ENCODE measurements at regions of chrX and their contacts with region 1.

Region 1: GRCh38 chrX:9525511-9526248 is 60.8 kb downstream of the TBL1X start:
- DNase-seq: peak in 2 of 35 experiments; percentile 2 to 21
- ATAC-seq: no peak
- H3K4me3 ChIP-seq: no peak overlapping the region
- H3K4me3 Mint-ChIP-seq: peak overlapping the region in 2 of 3 donors; percentile 3 to 21
- H3K27ac ChIP-seq: no peak overlapping the region
- H3K27ac Mint-ChIP-seq: peak overlapping the region; percentile 29 to 32
- H3K4me1 ChIP-seq: peaks cover 5 to 12% of the 10 kb centered on the region in 2 experiments
- H3K4me1 Mint-ChIP-seq: peaks cover 50 to 63% (median 55%) of the 10 kb centered on the region in 3 donors
- H3K27me3 ChIP-seq: no peaks in the 10 kb centered on the region
- H3K27me3 Mint-ChIP-seq: no peaks in the 10 kb centered on the region

Region 2: GRCh38 chrX:9482408-9482807 is 43.3 kb before region 1 on chrX:
- CTCF ChIA-PET with region 1: no interaction called
- POLR2A ChIA-PET with region 1: interaction called in 1 of 2 experiments, 18 read pairs
- DNase-seq: no peak
- ATAC-seq: no peak
- H3K4me3 ChIP-seq: no peak overlapping the region
- H3K4me3 Mint-ChIP-seq: no peak overlapping the region
- H3K27ac ChIP-seq: no peak overlapping the region
- H3K27ac Mint-ChIP-seq: no peak overlapping the region
- H3K4me1 ChIP-seq: peaks cover 0 to 2% of the 10 kb centered on the region in 2 experiments
- H3K4me1 Mint-ChIP-seq: peaks cover 34 to 55% (median 50%) of the 10 kb centered on the region in 3 donors
- H3K27me3 ChIP-seq: no peaks in the 10 kb centered on the region
- H3K27me3 Mint-ChIP-seq: no peaks in the 10 kb centered on the region